ENCODE measurements at regions of chr4 and their contacts with region 1.

Region 1: GRCh38 chr4:56743559-56743958 is 62.5 kb upstream of the HOPX start:
- DNase-seq: no peak
- ATAC-seq: no peak
- H3K4me3 ChIP-seq: no peak overlapping the region
- H3K4me3 Mint-ChIP-seq: no peak overlapping the region
- H3K27ac ChIP-seq: no peak overlapping the region
- H3K27ac Mint-ChIP-seq: no peak overlapping the region
- H3K4me1 ChIP-seq: no peaks in the 10 kb centered on the region
- H3K4me1 Mint-ChIP-seq: peaks cover 15% of the 10 kb centered on the region
- H3K27me3 ChIP-seq: no peaks in the 10 kb centered on the region
- H3K27me3 Mint-ChIP-seq: no peaks in the 10 kb centered on the region
- CTCF ChIP-seq: no peak

Region 2: GRCh38 chr4:56757821-56758411 is 14.4 kb after region 1 on chr4:
- CTCF ChIA-PET with region 1: no interaction called
- POLR2A ChIA-PET with region 1: interaction called, 16 read pairs
- intact Hi-C with region 1: no loop called
- DNase-seq: peak; percentile 35 to 85 (median 58)
- ATAC-seq: peak; percentile 81
- H3K4me3 ChIP-seq: peak overlapping the region; percentile 36
- H3K4me3 Mint-ChIP-seq: peak overlapping the region; percentile 83
- H3K27ac ChIP-seq: peak overlapping the region; percentile 71 to 75
- H3K27ac Mint-ChIP-seq: peak overlapping the region; percentile 89
- H3K4me1 ChIP-seq: peaks cover 44% of the 10 kb centered on the region
- H3K4me1 Mint-ChIP-seq: peaks cover 62% of the 10 kb centered on the region
- H3K27me3 ChIP-seq: no peaks in the 10 kb centered on the region
- H3K27me3 Mint-ChIP-seq: no peaks in the 10 kb centered on the region
- CTCF ChIP-seq: no peak

Measured in CD4-positive, alpha-beta T cell (primary cell).